Activated CD4-positive, alpha-beta memory T cell treated with anti-CD3 and anti-CD28 coated beads for 36 hours (primary cell): ENCODE measurements at regions of chrX and their contacts with region 1.

Region 1: DNA sequence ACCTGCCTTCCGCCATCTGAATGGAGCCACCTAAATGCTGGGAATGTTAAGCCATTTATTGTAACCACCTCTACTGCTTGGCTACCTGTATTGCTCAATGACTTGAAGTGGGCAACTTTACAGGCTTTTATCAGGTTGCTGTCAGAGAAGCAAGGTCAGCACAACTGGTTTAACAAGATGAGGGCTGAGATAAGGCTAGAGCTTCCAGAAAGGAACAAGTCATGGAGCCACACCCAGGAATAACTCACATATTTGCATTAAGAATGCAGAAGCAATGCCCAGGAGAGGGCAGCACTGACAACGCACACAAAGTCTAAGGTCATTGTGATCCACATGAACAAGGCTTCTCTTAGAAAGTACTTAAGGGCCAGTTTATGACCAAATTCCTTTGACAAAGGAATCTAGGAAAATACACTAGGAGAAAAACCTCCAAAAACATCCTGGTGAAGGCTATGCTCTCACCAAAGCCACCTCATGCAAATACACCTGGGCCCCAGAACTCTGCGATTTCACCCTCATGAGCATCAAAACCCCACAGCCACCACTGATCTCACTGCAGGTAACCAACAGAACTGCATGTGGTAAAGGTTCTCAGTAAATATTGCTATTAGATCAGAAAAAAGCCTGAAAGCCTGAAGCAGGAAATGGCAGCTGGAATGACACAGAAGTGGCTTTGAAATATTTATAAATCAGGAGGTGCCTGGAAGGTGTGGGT is 15.0 kb upstream of the STS start:
- DNase-seq: peak; percentile 31
- H3K4me3 Mint-ChIP-seq: no peak overlapping the region
- H3K27ac Mint-ChIP-seq: no peak overlapping the region
- H3K4me1 Mint-ChIP-seq: peaks cover 19% of the 10 kb centered on the region
- H3K27me3 Mint-ChIP-seq: no peaks in the 10 kb centered on the region

Region 2: GRCh38 chrX:7170903-7171302 is 38.4 kb after region 1 on chrX:
- CTCF ChIA-PET with region 1: interaction called, 4 read pairs
- POLR2A ChIA-PET with region 1: no interaction called
- intact Hi-C with region 1: loop called (anchors 1 kb)
- DNase-seq: peak; percentile 43
- H3K4me3 Mint-ChIP-seq: no peak overlapping the region
- H3K27ac Mint-ChIP-seq: no peak overlapping the region
- H3K4me1 Mint-ChIP-seq: no peaks in the 10 kb centered on the region
- H3K27me3 Mint-ChIP-seq: no peaks in the 10 kb centered on the region